Activated T-helper 2 cell treated with anti-CD3 and anti-CD28 coated beads, Interferon-gamma antibody, Interleukin-2, Interleukin-4, amounts not matched to agents 10 μg/mL and 5 μg/mL and 100 μg/mL, durations not matched to agents 14 hours and 24 hours and 36 hours (primary cell): ENCODE measurements at regions of chr20 and their contacts with region 1.

Region 1: DNA sequence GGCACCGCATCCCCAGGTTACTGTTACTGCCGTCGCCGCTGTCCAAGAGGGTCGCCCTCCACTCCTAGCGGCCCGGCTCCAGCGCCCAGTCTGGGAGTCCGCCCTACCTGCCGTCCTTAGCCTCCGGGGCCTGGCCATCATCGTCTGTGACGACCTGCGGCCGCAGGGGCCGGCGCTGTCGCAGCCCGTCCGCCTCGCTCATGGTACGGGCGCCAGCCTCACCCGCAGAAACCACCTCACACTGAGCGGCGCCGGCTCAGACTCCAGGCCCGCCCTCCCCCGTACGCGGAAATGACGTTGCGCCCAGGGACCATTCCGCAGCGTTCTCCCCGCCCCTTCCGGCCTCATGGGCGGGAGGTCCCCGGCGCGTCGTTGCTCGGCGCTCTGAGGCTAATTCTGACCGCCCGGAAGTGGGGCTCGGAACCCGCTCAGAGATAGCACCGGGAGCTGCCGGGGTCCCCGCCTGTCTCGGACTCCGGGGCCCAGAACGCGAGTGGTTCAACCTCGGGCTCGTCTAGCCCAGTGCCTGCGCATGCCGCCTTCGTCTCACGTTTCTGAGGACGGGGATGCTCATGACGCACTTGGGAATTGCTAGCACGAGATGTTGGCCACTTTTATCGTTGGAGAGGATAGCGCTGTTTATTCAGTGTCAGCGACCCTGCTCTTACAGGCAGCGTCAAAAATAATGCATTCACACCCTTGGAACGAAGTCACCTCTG is at the start of gene APMAP:
- DNase-seq: peak; percentile 92
- H3K4me3 Mint-ChIP-seq: peak within 1 kb of the TSS; percentile 97
- H3K27ac Mint-ChIP-seq: peak within 1 kb of the TSS; percentile 85
- H3K4me1 Mint-ChIP-seq: peaks cover 55% of the 10 kb centered on the region
- H3K27me3 Mint-ChIP-seq: peaks cover 19% of the 10 kb centered on the region
- total RNA-seq, gene APMAP: 48.5 and 48.8 TPM in 2 replicates

Region 2: GRCh38 chr20:24948939-24949679 is 43.5 kb before region 1 on chr20 and contains the start of gene CST7:
- intact Hi-C with region 1: loop called (anchors 2 kb)
- DNase-seq: peak; percentile 83
- H3K4me3 Mint-ChIP-seq: peak within 1 kb of the TSS; percentile 94
- H3K27ac Mint-ChIP-seq: peak within 1 kb of the TSS; percentile 96
- H3K4me1 Mint-ChIP-seq: peaks cover 57% of the 10 kb centered on the region
- H3K27me3 Mint-ChIP-seq: no peaks in the 10 kb centered on the region
- total RNA-seq, gene CST7: 115 and 121 TPM in 2 replicates

Region 3: DNA sequence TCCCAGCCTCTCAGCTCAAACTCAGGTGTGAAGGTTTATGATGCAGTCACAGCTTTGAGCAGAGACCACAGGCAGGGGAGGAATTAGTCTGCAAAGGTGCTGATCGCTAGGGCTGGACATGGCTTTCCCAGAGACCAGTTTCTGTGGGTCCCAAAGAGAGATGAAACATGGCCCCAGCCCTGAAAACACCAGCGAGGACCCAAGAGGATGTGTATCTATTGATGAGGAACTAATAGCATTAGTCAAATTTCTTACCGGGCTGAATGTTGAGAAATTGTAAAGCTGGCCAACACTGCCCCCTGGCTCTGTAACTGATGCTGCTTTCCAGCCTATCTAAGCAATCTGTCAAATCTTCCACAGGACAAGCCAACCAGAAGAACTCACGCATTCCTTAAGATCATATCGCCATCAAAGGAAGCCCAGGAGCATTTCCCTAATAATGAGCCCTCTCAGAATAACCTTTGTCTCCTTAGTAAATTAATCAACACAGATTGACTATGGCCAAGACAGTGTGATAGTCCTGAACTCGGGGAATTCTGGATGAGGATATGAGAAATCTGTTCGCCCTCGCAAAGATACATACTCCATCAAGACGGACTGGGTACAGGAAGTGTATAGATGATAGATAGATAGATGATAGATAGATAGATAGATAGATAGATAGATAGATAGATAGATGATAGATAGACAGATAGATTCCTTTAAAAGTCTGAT is 73.1 kb after region 1 on chr20:
- intact Hi-C with region 1: loop called (anchors 1 kb)
- DNase-seq: peak; percentile 35
- H3K4me3 Mint-ChIP-seq: no peak overlapping the region
- H3K27ac Mint-ChIP-seq: no peak overlapping the region
- H3K4me1 Mint-ChIP-seq: peaks cover 4% of the 10 kb centered on the region
- H3K27me3 Mint-ChIP-seq: peaks cover 51% of the 10 kb centered on the region

Region 4: DNA sequence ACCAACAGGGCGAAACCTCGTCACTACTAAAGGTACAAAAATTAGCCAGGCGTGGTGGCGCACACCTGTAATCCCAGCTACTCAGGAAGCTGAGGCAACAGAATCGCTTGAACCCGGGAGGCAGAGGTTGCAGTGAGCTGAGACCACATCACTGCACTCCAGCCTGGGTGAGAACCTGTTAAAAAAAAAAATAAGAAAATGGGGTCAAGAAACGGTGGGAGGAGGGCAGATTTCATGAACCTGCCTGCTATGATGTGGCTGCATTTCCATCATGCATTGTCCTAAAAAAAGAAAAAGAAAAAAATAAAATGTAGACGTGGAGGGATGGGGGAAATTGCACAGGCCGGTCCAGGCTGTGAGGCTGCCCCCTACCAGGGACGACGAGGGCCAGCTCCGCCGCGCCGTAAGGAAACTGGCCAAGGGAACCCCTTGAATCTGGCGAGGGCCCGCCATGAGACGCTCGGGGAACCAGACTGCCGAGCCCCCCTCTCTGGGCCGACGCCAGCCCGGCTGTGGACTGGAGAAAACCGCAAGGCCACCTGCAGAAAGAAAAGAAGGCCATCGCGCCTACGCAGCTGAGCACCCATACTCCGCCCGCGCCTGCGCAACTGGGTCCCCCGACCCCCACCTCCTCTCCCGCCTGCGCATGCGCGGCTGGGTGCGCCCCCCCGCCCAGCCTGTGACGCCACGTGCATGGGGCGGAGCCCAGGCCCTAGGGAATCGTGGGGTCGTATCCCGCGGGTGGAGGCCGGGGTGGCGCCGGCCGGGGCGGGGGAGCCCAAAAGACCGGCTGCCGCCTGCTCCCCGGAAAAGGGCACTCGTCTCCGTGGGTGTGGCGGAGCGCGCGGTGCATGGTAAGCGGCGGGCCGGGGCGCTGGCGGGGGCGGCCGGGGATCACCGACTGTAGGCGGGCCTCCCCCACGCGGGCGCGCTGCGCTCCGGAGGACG is 202.6 kb after region 1 on chr20 and contains the start of gene ENTPD6:
- intact Hi-C with region 1: loop called (anchors 5 kb)
- DNase-seq: peak; percentile 88
- H3K4me3 Mint-ChIP-seq: peak within 1 kb of the TSS; percentile 94
- H3K27ac Mint-ChIP-seq: peak within 1 kb of the TSS; percentile 75
- H3K4me1 Mint-ChIP-seq: peaks cover 22% of the 10 kb centered on the region
- H3K27me3 Mint-ChIP-seq: peaks cover 6% of the 10 kb centered on the region
- total RNA-seq, gene ENTPD6: 48.8 and 49.1 TPM in 2 replicates

Region 5: GRCh38 chr20:25294459-25295385 is 302.1 kb after region 1 on chr20:
- intact Hi-C with region 1: loop called (anchors 10 kb)
- DNase-seq: peak; percentile 39
- H3K4me3 Mint-ChIP-seq: no peak overlapping the region
- H3K27ac Mint-ChIP-seq: no peak overlapping the region
- H3K4me1 Mint-ChIP-seq: peaks cover 2% of the 10 kb centered on the region
- H3K27me3 Mint-ChIP-seq: no peaks in the 10 kb centered on the region

Region 6: DNA sequence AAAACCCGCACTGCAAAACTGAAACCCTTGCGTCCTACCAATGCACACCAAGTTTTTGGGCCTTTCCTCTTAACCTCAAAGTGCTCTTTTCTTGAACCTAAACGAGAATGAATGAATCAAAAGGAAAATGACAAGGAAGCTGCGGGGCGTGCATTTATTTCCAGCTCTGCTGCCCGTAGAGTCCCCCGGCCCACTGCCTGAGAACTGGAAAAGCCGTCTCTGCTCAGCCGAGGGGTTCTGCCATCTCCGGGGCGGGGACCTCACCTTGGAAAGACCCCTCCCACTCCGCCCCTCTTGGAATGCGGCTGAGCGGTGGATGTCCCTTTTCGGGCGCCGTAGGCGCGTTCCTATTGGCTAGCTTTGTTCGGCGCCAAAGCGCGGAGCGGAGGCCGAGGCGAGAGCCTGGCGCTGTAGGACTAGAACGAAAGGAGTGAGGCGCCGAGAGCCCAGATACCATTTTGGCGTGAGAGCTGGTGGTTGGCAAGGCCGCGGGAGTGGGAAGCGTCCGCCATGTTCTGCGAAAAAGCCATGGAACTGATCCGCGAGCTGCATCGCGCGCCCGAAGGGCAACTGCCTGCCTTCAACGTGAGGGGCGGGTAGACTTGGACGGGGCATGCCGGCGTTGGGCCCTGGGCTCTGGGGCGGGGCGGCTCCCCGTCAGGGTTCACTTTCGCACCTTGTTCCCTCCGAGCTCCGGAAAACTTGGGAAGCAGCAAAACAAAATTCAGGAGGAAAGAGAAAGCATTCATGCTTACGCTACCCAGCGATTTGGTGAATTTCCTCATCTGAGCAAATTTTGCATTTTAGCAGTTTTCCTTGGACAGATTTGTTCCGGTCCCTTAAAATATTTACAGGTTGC is 414.9 kb after region 1 on chr20 and contains the start of gene GINS1:
- intact Hi-C with region 1: loop called (anchors 5 kb)
- DNase-seq: peak; percentile 86
- H3K4me3 Mint-ChIP-seq: peak within 1 kb of the TSS; percentile 93
- H3K27ac Mint-ChIP-seq: peak within 1 kb of the TSS; percentile 92
- H3K4me1 Mint-ChIP-seq: peaks cover 20% of the 10 kb centered on the region
- H3K27me3 Mint-ChIP-seq: no peaks in the 10 kb centered on the region
- total RNA-seq, gene GINS1: 33.5 and 36.3 TPM in 2 replicates